BJ (cell line): ENCODE measurements at regions of chr6 and their contacts with region 1.

Region 1: GRCh38 chr6:30614843-30615218 is 2.2 kb downstream of the PPP1R10 start:
- DNase-seq: peak; percentile 94
- H3K4me3 ChIP-seq: peak overlapping the region; percentile 87
- H3K27me3 ChIP-seq: no peaks in the 10 kb centered on the region
- CTCF ChIP-seq: no peak

Region 2: GRCh38 chr6:30541515-30542403 is 73.1 kb before region 1 on chr6:
- CTCF ChIA-PET with region 1: interaction called, 10 read pairs
- POLR2A ChIA-PET with region 1: no interaction called
- DNase-seq: peak; percentile 31
- H3K4me3 ChIP-seq: no peak overlapping the region
- H3K27me3 ChIP-seq: no peaks in the 10 kb centered on the region
- CTCF ChIP-seq: peak; percentile 99

Region 3: GRCh38 chr6:30600451-30600961 is 14.3 kb before region 1 on chr6:
- CTCF ChIA-PET with region 1: interaction called, 31 read pairs
- POLR2A ChIA-PET with region 1: no interaction called
- DNase-seq: no peak
- H3K4me3 ChIP-seq: no peak overlapping the region
- H3K27me3 ChIP-seq: no peaks in the 10 kb centered on the region
- CTCF ChIP-seq: no peak

Region 4: GRCh38 chr6:30748851-30749558 is 134.2 kb after region 1 on chr6:
- CTCF ChIA-PET with region 1: no interaction called
- POLR2A ChIA-PET with region 1: interaction called, 16 read pairs
- DNase-seq: no peak
- H3K4me3 ChIP-seq: no peak overlapping the region
- H3K27me3 ChIP-seq: no peaks in the 10 kb centered on the region
- CTCF ChIP-seq: no peak

Region 5: DNA sequence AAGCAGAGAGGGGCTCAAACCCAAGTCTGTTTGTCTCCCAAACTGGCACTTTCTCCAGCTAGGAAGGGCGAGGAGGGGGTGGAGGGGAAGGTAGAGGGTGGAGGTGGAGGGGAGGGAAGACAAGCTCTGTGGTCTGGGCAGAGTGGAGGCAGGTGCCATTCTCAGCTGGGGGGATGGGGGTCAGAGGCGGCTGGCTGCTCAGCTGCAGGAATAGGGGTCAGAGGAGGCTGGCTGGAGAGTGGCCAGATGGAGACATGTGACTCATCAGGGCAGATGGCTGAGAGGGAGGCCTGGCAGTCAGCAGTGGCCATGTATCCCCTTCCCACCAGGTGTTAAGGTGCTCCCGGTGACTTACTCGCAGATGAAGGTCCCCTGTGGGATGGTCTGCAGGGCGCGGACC is 1267.5 kb after region 1 on chr6:
- CTCF ChIA-PET with region 1: no interaction called
- POLR2A ChIA-PET with region 1: interaction called, 28 read pairs
- DNase-seq: no peak
- H3K4me3 ChIP-seq: no peak overlapping the region
- H3K27me3 ChIP-seq: no peaks in the 10 kb centered on the region
- CTCF ChIP-seq: no peak